MCF 10A (cell line): ENCODE measurements at regions of chr12 and their contacts with region 1.

Region 1: DNA sequence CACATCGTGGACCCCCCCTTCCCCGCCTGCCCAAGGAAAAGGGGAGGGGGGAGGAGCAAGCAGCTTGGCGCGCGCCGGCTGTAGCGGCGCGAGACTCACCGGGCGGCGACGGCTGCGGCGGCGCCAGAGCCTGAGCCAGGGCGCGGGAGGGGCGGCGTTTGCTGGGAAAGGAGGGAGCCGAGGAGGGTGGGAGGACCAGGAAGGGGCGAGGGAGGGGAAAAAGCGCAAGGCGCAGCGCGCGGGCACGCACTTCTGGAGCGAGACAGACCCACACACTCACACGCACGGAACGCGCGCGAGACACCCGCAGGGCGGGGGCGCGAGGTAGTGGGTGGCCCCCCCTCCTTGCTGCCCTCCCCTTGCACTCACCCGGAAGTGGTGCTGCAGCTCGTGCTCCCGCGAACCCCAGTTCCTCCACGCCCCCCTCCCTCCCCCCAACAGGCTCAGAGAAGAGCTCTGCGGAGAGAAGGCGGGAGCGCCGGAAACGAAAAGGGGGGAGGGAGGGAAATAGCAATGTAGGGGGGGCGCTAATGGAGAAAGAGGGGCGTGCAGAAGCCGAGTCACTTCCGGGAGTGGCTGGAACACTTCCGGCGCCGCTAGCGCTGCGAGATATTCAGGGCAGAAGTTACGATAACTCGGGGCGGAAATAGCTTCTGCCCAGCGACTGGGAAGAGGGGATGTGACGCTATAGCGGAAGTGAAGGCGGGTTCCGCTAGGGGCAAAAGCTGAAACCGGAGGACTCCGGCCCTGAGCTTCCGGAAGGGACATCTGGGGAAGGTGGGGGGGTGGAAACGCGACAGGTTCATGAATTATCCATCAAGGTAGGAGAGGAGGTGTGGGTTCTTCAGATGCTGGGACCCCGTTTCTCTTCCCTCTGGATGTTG is at the start of gene ZNF384:
- DNase-seq: peak; percentile 99
- H3K4me3 Mint-ChIP-seq: peak within 1 kb of the TSS; percentile 98
- H3K27ac Mint-ChIP-seq: peak within 1 kb of the TSS; percentile 99
- H3K4me1 Mint-ChIP-seq: peaks cover 22% of the 10 kb centered on the region
- H3K27me3 Mint-ChIP-seq: peaks cover 3% of the 10 kb centered on the region
- CTCF ChIP-seq: no peak
- total RNA-seq, gene ZNF384: 62.8 and 70.8 TPM in 2 replicates

Region 2: DNA sequence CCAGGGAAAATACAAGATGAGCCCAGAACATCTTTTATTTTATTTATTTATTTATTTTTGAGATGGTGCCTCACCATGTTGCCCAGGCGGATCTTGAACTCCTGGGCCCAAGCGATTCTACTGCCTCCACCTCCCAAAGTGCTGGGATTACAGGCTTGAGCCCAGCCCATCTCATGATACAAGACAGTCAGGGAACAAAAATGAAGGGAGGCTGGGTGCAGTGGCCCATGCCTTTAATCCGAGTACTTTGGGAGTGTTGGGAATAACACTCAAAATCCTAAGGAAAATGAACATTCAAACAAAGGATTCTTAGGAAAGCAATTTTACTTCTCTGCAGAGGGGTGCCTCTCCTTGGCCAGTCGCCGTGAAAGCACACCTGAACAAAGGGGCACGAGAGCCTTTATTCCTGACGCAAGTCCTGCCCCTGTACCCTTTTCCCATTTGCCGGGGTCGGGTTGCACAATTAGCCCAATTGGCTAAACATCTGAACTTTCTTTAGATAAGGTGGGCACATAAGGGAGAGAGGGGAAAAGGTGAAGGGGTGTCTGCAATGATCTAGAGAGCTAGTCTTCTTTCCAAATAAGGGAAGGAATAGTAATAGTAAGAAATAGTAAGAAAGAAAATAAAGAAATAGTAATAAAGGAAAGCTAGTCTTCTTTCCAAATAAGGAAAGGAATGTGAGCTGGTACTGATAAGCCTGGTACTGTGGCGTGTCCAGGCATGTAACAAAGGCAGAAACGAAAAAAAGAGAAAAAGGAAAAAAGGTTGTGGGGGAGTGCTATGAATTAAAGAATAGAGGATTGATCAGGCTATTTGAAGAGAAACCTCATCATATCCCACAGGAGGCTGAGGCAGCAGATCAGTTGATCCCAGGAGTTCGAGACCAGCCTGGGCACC is 181.9 kb before region 1 on chr12:
- CTCF ChIA-PET with region 1: no interaction called
- POLR2A ChIA-PET with region 1: no interaction called
- intact Hi-C with region 1: no loop called
- DNase-seq: peak; percentile 6
- H3K4me3 Mint-ChIP-seq: peak overlapping the region; percentile 43
- H3K27ac Mint-ChIP-seq: peak overlapping the region; percentile 95
- H3K4me1 Mint-ChIP-seq: peaks cover 8% of the 10 kb centered on the region
- H3K27me3 Mint-ChIP-seq: no peaks in the 10 kb centered on the region
- CTCF ChIP-seq: no peak

Region 3: GRCh38 chr12:6607751-6608591 is 81.3 kb before region 1 on chr12:
- CTCF ChIA-PET with region 1: interaction called, 3 read pairs
- POLR2A ChIA-PET with region 1: interaction called, 17 read pairs
- intact Hi-C with region 1: no loop called
- DNase-seq: peak; percentile 92
- H3K4me3 Mint-ChIP-seq: no peak overlapping the region
- H3K27ac Mint-ChIP-seq: no peak overlapping the region
- H3K4me1 Mint-ChIP-seq: peaks cover 39% of the 10 kb centered on the region
- H3K27me3 Mint-ChIP-seq: no peaks in the 10 kb centered on the region
- CTCF ChIP-seq: no peak

Region 4: DNA sequence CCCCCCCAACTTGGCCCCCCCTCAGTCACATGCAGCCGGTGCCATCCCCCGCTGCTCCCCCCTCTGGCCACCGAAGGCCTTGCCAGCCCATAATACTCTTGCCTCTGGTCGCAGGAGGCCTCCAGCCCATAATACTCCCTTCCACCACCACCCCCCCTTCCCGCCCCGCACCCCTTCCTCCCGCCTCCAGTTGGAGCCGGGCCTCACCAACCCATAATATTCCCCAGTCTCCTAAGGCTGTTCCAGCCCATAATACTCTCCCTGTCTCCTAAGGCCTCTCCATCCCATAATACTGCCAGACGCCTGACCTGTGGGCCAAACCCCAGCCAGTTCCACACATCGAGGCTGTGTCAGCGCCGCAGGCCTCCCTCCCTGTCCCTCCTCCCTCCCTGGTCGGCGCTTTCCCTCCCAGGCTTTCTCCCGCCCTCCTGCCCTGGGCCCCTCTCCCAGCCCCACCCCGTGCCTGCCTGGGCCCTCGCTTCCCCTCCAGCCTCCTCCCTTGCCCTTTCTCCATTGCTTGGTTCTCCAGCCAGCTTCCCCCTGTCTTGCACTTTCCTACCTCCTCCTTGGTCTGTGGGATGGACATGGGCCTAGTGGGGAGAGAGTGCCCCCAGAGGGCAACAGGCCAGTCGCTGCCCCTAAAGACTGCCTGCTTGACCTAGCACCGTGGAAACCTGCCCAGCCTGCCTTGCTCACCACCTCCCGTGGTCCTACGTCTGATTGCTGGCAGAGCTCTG is 75.3 kb before region 1 on chr12:
- CTCF ChIA-PET with region 1: interaction called, 6 read pairs
- POLR2A ChIA-PET with region 1: interaction called, 17 read pairs
- intact Hi-C with region 1: loop called (anchors 1 kb)
- DNase-seq: peak; percentile 86
- H3K4me3 Mint-ChIP-seq: no peak overlapping the region
- H3K27ac Mint-ChIP-seq: peak overlapping the region; percentile 90
- H3K4me1 Mint-ChIP-seq: peaks cover 32% of the 10 kb centered on the region
- H3K27me3 Mint-ChIP-seq: no peaks in the 10 kb centered on the region
- CTCF ChIP-seq: no peak

Region 5: GRCh38 chr12:6662906-6663742 is 26.1 kb before region 1 on chr12 and contains the start of gene ING4:
- CTCF ChIA-PET with region 1: interaction called, 10 read pairs
- POLR2A ChIA-PET with region 1: interaction called, 48 read pairs
- intact Hi-C with region 1: loop called (anchors 1 kb)
- DNase-seq: peak; percentile 100
- H3K4me3 Mint-ChIP-seq: peak within 1 kb of the TSS; percentile 82
- H3K27ac Mint-ChIP-seq: peak within 1 kb of the TSS; percentile 81
- H3K4me1 Mint-ChIP-seq: peaks cover 8% of the 10 kb centered on the region
- H3K27me3 Mint-ChIP-seq: no peaks in the 10 kb centered on the region
- CTCF ChIP-seq: no peak
- total RNA-seq, gene ING4: 15.2 and 16.1 TPM in 2 replicates

Region 6: GRCh38 chr12:6723607-6724396 is 34.6 kb after region 1 on chr12 and contains the start of gene COPS7A:
- CTCF ChIA-PET with region 1: interaction called, 5 read pairs
- POLR2A ChIA-PET with region 1: interaction called, 159 read pairs
- intact Hi-C with region 1: loop called (anchors 1 kb)
- DNase-seq: peak; percentile 99
- H3K4me3 Mint-ChIP-seq: peak within 1 kb of the TSS; percentile 70
- H3K27ac Mint-ChIP-seq: peak within 1 kb of the TSS; percentile 83
- H3K4me1 Mint-ChIP-seq: no peaks in the 10 kb centered on the region
- H3K27me3 Mint-ChIP-seq: no peaks in the 10 kb centered on the region
- CTCF ChIP-seq: no peak
- total RNA-seq, gene COPS7A: 55.5 and 61.3 TPM in 2 replicates

Region 7: DNA sequence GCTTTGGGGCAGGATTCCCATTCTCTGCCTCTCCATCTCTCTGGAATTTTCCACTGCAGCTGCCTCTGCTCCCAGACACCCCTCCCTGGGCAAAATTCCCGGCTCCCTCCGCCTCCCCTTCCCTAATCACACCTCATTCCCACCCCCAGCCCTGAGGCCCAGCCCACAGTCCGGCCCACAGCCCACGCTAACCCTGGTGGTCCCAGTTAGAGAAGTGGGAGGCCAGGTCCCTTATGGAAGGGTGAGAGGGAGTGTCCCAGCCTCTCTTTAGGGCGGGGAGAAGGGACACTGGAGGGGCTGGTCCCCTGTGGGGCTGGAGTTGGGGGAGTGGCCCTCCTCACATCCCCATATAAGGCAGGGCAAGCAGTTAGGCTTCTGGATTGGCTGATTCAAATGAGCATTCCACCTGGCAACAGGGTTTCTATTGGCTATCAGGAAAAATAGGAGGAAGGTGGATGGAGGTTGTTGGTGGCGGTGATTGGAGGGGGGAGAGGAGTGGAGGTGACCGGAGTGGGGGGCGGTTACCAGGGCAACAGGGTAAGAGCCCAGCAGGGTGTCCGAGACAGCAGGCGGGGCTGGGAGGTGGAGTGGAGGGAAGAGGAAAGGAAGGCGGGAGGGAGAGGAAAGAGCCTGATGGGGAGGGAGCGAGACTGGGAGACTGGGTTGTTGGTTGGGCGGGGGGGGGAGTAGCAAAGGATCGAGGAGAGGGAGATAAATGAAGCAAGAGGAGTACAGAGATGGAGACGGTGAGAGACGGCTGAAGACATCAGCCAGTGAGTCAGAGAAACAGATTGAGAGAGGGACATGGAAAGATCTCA is 75.0 kb after region 1 on chr12:
- CTCF ChIA-PET with region 1: no interaction called
- POLR2A ChIA-PET with region 1: interaction called, 14 read pairs
- intact Hi-C with region 1: no loop called
- DNase-seq: peak; percentile 99
- H3K4me3 Mint-ChIP-seq: peak overlapping the region; percentile 84
- H3K27ac Mint-ChIP-seq: peak overlapping the region; percentile 95
- H3K4me1 Mint-ChIP-seq: peaks cover 42% of the 10 kb centered on the region
- H3K27me3 Mint-ChIP-seq: no peaks in the 10 kb centered on the region
- CTCF ChIP-seq: no peak